ENCODE measurements at regions of chr20 and their contacts with region 1.

Region 1: DNA sequence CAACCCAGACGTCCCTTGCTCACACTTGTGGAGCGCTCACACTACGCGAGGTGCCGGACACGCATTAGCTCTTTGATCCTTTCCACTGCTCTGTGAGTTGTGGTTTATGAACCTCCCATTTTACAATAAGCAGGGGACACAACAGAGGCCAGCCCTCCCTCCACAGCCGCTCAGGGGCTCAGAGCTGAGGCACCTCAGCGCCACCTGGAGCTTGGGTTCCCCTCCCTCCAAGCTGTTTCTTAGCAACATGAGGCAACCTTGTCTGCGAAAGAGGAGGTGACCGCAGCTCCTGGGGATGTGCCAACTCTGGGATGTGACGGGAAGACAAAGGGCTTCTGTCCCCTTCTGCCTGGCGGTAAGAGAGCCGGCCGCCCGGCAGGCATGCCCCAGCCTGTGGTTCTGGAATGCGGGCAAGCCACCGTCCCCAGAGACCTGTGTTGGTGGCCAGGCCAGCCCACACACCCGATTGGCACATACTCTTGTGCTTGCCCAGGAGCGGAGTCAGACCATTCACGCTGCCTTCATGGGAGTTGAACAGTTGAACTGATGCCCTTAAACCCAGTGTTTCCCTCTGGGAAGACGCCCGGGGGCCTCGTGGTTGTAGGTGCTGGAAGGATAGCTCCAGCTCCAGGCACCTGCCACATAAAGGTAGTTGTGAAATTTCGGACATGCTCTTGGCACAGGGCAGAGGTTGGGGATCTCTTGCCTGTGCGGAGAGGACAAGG is 44.5 kb downstream of the RBM38 start:
- DNase-seq: peak; percentile 76
- H3K4me3 ChIP-seq: no peak overlapping the region
- H3K27ac ChIP-seq: no peak overlapping the region
- H3K4me1 ChIP-seq: peaks cover 64% of the 10 kb centered on the region
- CTCF ChIP-seq: peak; percentile 76

Region 2: GRCh38 chr20:57391074-57391554 is 44.5 kb before region 1 on chr20 and contains the start of gene RBM38:
- CTCF ChIA-PET with region 1: interaction called, 4 read pairs
- POLR2A ChIA-PET with region 1: interaction called, 8 read pairs
- intact Hi-C with region 1: loop called (anchors 2 kb)
- DNase-seq: peak; percentile 87
- H3K4me3 ChIP-seq: peak within 1 kb of the TSS; percentile 99
- H3K27ac ChIP-seq: peak within 1 kb of the TSS; percentile 97
- H3K4me1 ChIP-seq: peaks cover 61% of the 10 kb centered on the region
- CTCF ChIP-seq: no peak
- total RNA-seq, gene RBM38: 136 and 174 TPM in 2 replicates

Region 3: GRCh38 chr20:57398231-57398821 is 37.3 kb before region 1 on chr20:
- CTCF ChIA-PET with region 1: interaction called, 3 read pairs
- POLR2A ChIA-PET with region 1: interaction called, 9 read pairs
- intact Hi-C with region 1: loop called (anchors 2 kb)
- DNase-seq: peak; percentile 97
- H3K4me3 ChIP-seq: peak overlapping the region; percentile 99
- H3K27ac ChIP-seq: peak overlapping the region; percentile 97
- H3K4me1 ChIP-seq: peaks cover 88% of the 10 kb centered on the region
- CTCF ChIP-seq: 0 out of 2 replicates have a peak, but pooled peaks have one; percentile 33

Measured in OCI-LY7 (cell line).